ENCODE measurements at regions of chr5 and their contacts with region 1.

Region 1: DNA sequence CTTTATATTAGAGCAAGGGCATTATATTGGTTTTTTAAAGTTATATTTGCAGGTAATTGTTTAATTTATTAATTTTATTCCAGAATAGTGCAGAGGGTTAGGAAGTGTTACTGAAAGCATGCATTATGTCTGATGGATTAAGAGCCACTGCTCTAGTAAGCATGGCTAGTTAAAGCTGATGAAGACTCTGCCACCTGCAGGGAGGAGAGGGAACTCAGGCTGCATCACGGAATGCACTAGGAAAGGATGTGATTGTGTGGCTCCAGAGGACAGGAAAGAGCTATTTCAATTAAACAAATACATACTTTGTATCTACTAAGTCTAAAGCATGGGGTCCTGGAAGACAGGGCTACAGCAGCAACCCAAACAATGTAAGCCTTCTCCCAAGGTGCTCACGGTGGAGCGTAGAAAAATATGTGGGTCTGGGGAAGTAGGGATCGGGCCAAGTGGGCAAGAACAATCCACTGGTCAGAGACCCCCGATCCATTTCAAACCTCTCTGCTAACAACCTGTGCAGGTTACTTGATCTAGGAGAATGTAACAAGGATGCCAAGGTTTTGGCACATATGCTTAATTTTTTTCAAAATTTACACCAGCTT is 15.3 kb upstream of the GRXCR2 start:
- DNase-seq: peak; percentile 62
- ATAC-seq: peak; percentile 95
- H3K4me3 ChIP-seq: no peak overlapping the region
- H3K27ac ChIP-seq: no peak overlapping the region
- H3K4me1 ChIP-seq: no peaks in the 10 kb centered on the region
- H3K27me3 ChIP-seq: peaks cover 8% of the 10 kb centered on the region
- CTCF ChIP-seq: peak; percentile 68
- POLR2A ChIP-seq: no peak
- RAD21 ChIP-seq: peak; percentile 71

Region 2: DNA sequence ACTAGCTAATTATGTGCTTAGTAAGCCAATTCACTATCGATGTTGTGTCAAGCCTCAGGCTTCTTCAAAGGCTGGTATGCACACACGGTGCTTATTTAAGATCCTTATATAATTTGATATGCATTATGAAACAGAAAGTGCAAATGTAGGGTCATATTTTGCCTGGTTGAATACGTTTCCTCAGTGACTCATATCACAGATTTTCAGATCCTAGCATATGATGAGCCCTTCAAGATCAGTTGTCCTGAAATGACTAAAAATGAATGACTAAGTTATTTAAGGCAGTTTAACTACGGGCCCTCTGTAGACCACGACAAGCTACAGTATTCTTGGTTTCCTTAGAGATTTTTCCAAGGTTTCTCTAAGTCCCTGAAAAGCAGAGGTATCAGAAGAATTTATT is 831.3 kb before region 1 on chr5:
- CTCF ChIA-PET with region 1: no interaction called
- POLR2A ChIA-PET with region 1: no interaction called
- dilution Hi-C with region 1: no loop called
- in situ Hi-C with region 1: no loop called
- intact Hi-C with region 1: no loop called
- DNase-seq: peak; percentile 71
- ATAC-seq: peak; percentile 82
- H3K4me3 ChIP-seq: no peak overlapping the region; the same call in 1 of the 2 replicates
- H3K27ac ChIP-seq: no peak overlapping the region
- H3K4me1 ChIP-seq: no peaks in the 10 kb centered on the region
- H3K27me3 ChIP-seq: no peaks in the 10 kb centered on the region
- CTCF ChIP-seq: no peak
- POLR2A ChIP-seq: no peak
- RAD21 ChIP-seq: no peak

Region 3: GRCh38 chr5:145681686-145682085 is 206.4 kb before region 1 on chr5:
- CTCF ChIA-PET with region 1: no interaction called
- POLR2A ChIA-PET with region 1: no interaction called
- dilution Hi-C with region 1: no loop called
- in situ Hi-C with region 1: no loop called
- intact Hi-C with region 1: loop called (anchors 1 kb)
- DNase-seq: peak; percentile 73
- ATAC-seq: peak; percentile 85
- H3K4me3 ChIP-seq: no peak overlapping the region
- H3K27ac ChIP-seq: no peak overlapping the region
- H3K4me1 ChIP-seq: no peaks in the 10 kb centered on the region
- H3K27me3 ChIP-seq: no peaks in the 10 kb centered on the region
- CTCF ChIP-seq: peak; percentile 67
- POLR2A ChIP-seq: no peak
- RAD21 ChIP-seq: peak; percentile 64

Region 4: DNA sequence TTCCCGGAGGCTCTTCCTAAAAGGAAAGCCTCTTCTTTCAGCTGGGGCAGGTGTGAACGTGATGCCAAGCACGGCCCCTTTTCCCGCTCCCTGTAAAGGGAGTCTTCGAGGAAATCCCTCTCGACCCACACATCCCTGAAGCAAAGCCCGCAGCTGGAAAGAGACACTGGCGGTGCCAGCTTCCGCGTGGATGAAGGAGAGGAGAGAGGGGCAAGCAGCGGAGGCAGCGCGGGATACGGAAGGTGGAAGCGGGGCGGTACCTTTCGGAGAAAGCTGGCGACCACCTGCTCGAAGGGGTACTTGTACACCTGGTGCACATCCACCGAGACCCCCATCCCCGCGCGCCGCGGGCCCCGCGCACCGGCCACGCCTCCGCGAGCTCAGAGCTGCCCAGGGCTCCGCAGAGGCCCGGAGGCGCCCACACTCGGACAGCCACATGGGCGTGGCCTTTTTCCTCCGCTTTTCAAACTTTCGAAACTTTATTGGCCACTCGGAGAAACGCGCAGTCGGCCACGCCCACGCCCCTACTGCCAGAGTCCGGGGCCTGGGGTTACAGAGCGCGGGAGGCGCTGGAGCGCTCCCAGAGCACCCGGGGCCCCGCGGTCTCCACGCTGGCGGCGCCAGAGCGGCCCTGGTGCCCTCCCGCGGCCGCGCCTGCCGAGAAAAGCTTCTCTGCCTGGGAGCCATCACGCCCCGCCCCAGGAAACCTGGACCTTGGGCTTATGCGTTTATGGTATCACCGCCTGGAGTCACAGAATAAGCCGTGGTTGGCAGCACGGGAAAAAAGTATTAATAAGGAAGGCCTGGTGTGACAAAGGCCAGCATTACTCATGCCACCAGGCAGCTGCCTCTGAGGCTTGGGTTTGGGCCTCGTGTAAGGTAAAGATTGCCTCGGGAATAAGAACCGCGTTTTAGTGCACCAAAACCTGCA is 52.9 kb before region 1 on chr5 and contains the start of gene PRELID2:
- CTCF ChIA-PET with region 1: interaction called, 8 read pairs
- POLR2A ChIA-PET with region 1: no interaction called
- dilution Hi-C with region 1: no loop called
- in situ Hi-C with region 1: no loop called
- intact Hi-C with region 1: loop called (anchors 5 kb)
- DNase-seq: peak; percentile 84
- ATAC-seq: peak; percentile 91
- H3K4me3 ChIP-seq: peak within 1 kb of the TSS; percentile 60
- H3K27ac ChIP-seq: peak within 1 kb of the TSS; percentile 13
- H3K4me1 ChIP-seq: peaks cover 5% of the 10 kb centered on the region
- H3K27me3 ChIP-seq: no peaks in the 10 kb centered on the region
- CTCF ChIP-seq: 0 out of 2 replicates have a peak, but pooled peaks have one; percentile 3
- POLR2A ChIP-seq: peak; percentile 52; the same call in 1 of the 2 replicates
- RAD21 ChIP-seq: peak; percentile 7; the same call in 1 of the 2 replicates
- total RNA-seq, gene PRELID2: 8.6 and 13.9 TPM in 2 replicates

Region 5: GRCh38 chr5:145856285-145856818 is 31.7 kb before region 1 on chr5:
- CTCF ChIA-PET with region 1: interaction called, 12 read pairs
- POLR2A ChIA-PET with region 1: no interaction called
- dilution Hi-C with region 1: no loop called
- in situ Hi-C with region 1: no loop called
- intact Hi-C with region 1: no loop called
- DNase-seq: peak; percentile 83
- ATAC-seq: peak; percentile 74
- H3K4me3 ChIP-seq: no peak overlapping the region
- H3K27ac ChIP-seq: peak overlapping the region; percentile 54
- H3K4me1 ChIP-seq: peaks cover 10% of the 10 kb centered on the region
- H3K27me3 ChIP-seq: no peaks in the 10 kb centered on the region
- CTCF ChIP-seq: no peak
- POLR2A ChIP-seq: no peak
- RAD21 ChIP-seq: no peak

Region 6: DNA sequence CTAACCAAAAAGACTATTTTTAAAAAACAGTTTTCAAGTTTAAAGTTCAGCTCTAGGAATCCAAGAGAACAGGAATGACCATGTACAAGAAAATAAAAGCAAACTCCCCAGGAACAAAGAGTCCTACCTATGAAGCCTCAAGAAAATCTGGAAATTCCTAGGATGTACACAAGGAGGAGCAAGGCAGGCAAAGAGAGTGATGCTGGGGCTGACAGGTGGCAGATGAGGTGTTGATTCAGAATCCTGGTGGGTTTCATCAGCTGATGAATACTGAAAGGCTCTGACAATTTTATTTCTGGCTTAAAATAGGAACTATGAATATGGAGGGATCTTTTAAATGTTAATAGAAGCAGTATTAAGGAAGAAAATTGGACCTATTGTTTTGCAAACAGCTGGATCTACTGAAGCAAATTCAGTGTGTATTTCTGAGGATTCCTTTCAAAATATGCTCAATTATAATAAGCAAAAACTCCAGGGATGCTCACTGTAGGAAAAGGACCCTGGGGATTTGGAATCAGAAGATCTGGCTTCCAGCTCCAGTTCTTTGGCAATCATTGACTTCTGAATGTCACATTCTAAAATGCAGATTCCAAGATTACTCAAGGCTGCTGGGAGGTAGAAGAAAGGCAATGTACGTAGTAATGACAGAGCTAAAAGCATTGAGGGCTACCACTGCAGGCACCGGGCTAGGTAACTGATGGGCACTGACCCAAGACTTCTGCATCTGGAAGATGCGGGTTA is 20.3 kb after region 1 on chr5:
- CTCF ChIA-PET with region 1: interaction called, 10 read pairs
- POLR2A ChIA-PET with region 1: no interaction called
- dilution Hi-C with region 1: no loop called
- in situ Hi-C with region 1: no loop called
- intact Hi-C with region 1: no loop called
- DNase-seq: no peak
- ATAC-seq: no peak
- H3K4me3 ChIP-seq: no peak overlapping the region
- H3K27ac ChIP-seq: no peak overlapping the region
- H3K4me1 ChIP-seq: no peaks in the 10 kb centered on the region
- H3K27me3 ChIP-seq: peaks cover 11% of the 10 kb centered on the region
- CTCF ChIP-seq: no peak
- POLR2A ChIP-seq: no peak
- RAD21 ChIP-seq: no peak

Region 7: GRCh38 chr5:146052780-146053179 is 164.7 kb after region 1 on chr5:
- CTCF ChIA-PET with region 1: no interaction called
- POLR2A ChIA-PET with region 1: no interaction called
- dilution Hi-C with region 1: no loop called
- in situ Hi-C with region 1: no loop called
- intact Hi-C with region 1: no loop called
- DNase-seq: no peak
- ATAC-seq: no peak
- H3K4me3 ChIP-seq: no peak overlapping the region
- H3K27ac ChIP-seq: no peak overlapping the region
- H3K4me1 ChIP-seq: no peaks in the 10 kb centered on the region
- H3K27me3 ChIP-seq: peaks cover 2% of the 10 kb centered on the region; the same call in 1 of the 2 replicates
- CTCF ChIP-seq: peak; percentile 27; the same call in 1 of the 2 replicates
- POLR2A ChIP-seq: no peak
- RAD21 ChIP-seq: peak; percentile 29; the same call in 1 of the 2 replicates

Measured in IMR-90 (cell line).